Activated CD4-positive, alpha-beta memory T cell treated with anti-CD3 and anti-CD28 coated beads for 36 hours (primary cell): ENCODE measurements at regions of chr17 and their contacts with region 1.

Region 1: GRCh38 chr17:59753522-59754467 is 46.3 kb downstream of the VMP1 start:
- DNase-seq: no peak
- H3K4me3 Mint-ChIP-seq: peak overlapping the region; percentile 62
- H3K27ac Mint-ChIP-seq: peak overlapping the region; percentile 97
- H3K4me1 Mint-ChIP-seq: peaks cover 71% of the 10 kb centered on the region
- H3K27me3 Mint-ChIP-seq: no peaks in the 10 kb centered on the region

Region 2: GRCh38 chr17:59769891-59770290 is 16.1 kb after region 1 on chr17:
- CTCF ChIA-PET with region 1: interaction called, 28 read pairs
- POLR2A ChIA-PET with region 1: interaction called, 91 read pairs
- intact Hi-C with region 1: no loop called
- DNase-seq: no peak
- H3K4me3 Mint-ChIP-seq: no peak overlapping the region
- H3K27ac Mint-ChIP-seq: peak overlapping the region; percentile 28
- H3K4me1 Mint-ChIP-seq: peaks cover 30% of the 10 kb centered on the region
- H3K27me3 Mint-ChIP-seq: no peaks in the 10 kb centered on the region

Region 3: GRCh38 chr17:59786536-59787319 is 32.9 kb after region 1 on chr17:
- CTCF ChIA-PET with region 1: interaction called, 27 read pairs
- POLR2A ChIA-PET with region 1: interaction called, 254 read pairs
- intact Hi-C with region 1: loop called (anchors 1 kb)
- DNase-seq: peak; percentile 89
- H3K4me3 Mint-ChIP-seq: peak overlapping the region; percentile 77
- H3K27ac Mint-ChIP-seq: peak overlapping the region; percentile 100
- H3K4me1 Mint-ChIP-seq: peaks cover 64% of the 10 kb centered on the region
- H3K27me3 Mint-ChIP-seq: no peaks in the 10 kb centered on the region

Region 4: GRCh38 chr17:59829217-59830006 is 75.6 kb after region 1 on chr17:
- CTCF ChIA-PET with region 1: interaction called, 64 read pairs
- POLR2A ChIA-PET with region 1: interaction called, 365 read pairs
- intact Hi-C with region 1: loop called (anchors 1 kb)
- DNase-seq: peak; percentile 66
- H3K4me3 Mint-ChIP-seq: peak overlapping the region; percentile 79
- H3K27ac Mint-ChIP-seq: peak overlapping the region; percentile 100
- H3K4me1 Mint-ChIP-seq: peaks cover 64% of the 10 kb centered on the region
- H3K27me3 Mint-ChIP-seq: no peaks in the 10 kb centered on the region

Region 5: GRCh38 chr17:59846394-59847165 is 92.8 kb after region 1 on chr17:
- CTCF ChIA-PET with region 1: interaction called, 58 read pairs
- POLR2A ChIA-PET with region 1: interaction called, 359 read pairs
- intact Hi-C with region 1: loop called (anchors 1 kb)
- DNase-seq: peak; percentile 31
- H3K4me3 Mint-ChIP-seq: peak overlapping the region; percentile 60
- H3K27ac Mint-ChIP-seq: peak overlapping the region; percentile 100
- H3K4me1 Mint-ChIP-seq: peaks cover 68% of the 10 kb centered on the region
- H3K27me3 Mint-ChIP-seq: peaks cover 2% of the 10 kb centered on the region

Region 6: DNA sequence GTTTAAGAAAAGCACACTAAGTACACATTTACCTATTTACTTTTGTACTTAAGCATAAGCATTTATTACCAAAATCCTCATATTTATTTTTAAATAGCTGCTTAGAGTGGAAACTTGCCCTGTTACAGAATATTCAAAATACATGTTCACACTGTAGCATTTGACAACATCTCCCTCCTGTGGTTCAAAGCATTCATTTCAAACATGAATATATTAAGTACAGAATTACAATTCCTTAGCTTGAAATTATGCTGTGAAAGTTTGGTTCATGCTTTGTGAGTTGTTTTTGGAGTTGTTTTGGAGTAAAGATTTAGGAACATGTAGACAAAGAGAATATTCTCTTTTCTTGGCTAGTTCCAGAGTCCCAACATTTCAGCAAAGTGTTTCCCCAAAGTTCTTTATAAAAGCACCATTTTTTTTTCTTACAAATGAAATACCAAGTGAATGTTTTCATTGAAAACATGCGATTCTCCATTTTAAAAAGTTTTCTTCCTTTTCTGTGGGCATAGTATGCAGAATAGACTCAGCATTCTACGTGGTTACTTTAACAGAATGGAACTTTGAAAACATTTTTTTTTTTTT is 105.7 kb after region 1 on chr17:
- CTCF ChIA-PET with region 1: interaction called, 22 read pairs
- POLR2A ChIA-PET with region 1: interaction called, 13 read pairs
- intact Hi-C with region 1: loop called (anchors 1 kb)
- DNase-seq: no peak
- H3K4me3 Mint-ChIP-seq: no peak overlapping the region
- H3K27ac Mint-ChIP-seq: peak overlapping the region; percentile 50
- H3K4me1 Mint-ChIP-seq: peaks cover 15% of the 10 kb centered on the region
- H3K27me3 Mint-ChIP-seq: no peaks in the 10 kb centered on the region

Region 7: DNA sequence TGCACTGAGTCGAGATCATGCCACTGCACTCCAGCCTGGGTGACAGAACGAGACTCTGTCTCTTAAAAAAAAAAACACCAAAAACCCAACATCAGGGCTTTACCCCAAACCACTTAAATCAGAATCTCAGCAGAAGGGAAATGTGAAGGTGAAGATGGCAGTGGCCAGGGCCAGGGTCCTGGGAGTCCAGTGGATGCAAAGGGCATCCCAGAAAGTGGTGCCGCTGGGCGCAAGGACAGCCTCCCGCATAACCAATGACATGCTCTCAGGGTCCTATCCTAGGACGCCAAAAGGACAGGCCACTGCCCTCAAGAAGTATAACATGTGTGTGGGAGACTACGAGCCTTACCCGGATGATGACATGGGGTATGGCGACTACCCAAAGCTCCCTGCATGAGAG is 131.1 kb after region 1 on chr17:
- CTCF ChIA-PET with region 1: no interaction called
- POLR2A ChIA-PET with region 1: no interaction called
- intact Hi-C with region 1: no loop called
- DNase-seq: no peak
- H3K4me3 Mint-ChIP-seq: no peak overlapping the region
- H3K27ac Mint-ChIP-seq: no peak overlapping the region
- H3K4me1 Mint-ChIP-seq: peaks cover 10% of the 10 kb centered on the region
- H3K27me3 Mint-ChIP-seq: no peaks in the 10 kb centered on the region